ENCODE measurements at regions of chrX and their contacts with region 1.

Region 1: GRCh38 chrX:71254092-71254941 is at the start of gene ZMYM3:
- DNase-seq: peak; percentile 76
- ATAC-seq: peak; percentile 89
- H3K4me3 ChIP-seq: peak within 1 kb of the TSS; percentile 100
- H3K27ac ChIP-seq: peak within 1 kb of the TSS; percentile 98
- H3K4me1 ChIP-seq: peaks cover 8% of the 10 kb centered on the region
- H3K27me3 ChIP-seq: no peaks in the 10 kb centered on the region
- CTCF ChIP-seq: no peak
- POLR2A ChIP-seq: no peak
- RAD21 ChIP-seq: no peak
- total RNA-seq, gene ZMYM3: 8.3 and 10.0 TPM in 2 replicates

Region 2: DNA sequence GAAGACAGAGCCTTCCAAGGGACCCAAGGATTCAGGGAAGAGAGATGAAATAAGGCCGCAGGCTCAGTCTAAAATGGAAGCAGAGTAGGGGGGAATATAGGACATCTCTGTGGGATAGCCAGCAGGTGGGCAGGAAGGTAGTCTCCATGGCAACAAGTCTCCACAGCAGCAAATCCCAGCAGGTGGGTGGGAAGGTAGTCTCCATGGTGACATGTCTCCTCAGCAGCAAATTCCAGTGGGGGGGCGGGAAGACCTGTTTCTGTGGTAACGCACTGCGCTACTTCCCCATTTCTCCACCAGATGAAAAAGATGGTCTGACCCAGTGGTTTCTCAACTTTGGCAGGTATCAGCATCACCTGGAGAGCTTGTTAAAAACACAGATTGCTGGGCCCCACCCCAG is 91.3 kb before region 1 on chrX:
- CTCF ChIA-PET with region 1: no interaction called
- POLR2A ChIA-PET with region 1: no interaction called
- dilution Hi-C with region 1: no loop called
- in situ Hi-C with region 1: no loop called
- intact Hi-C with region 1: no loop called
- DNase-seq: no peak
- ATAC-seq: no peak
- H3K4me3 ChIP-seq: no peak overlapping the region
- H3K27ac ChIP-seq: no peak overlapping the region
- H3K4me1 ChIP-seq: no peaks in the 10 kb centered on the region
- H3K27me3 ChIP-seq: peaks cover 11% of the 10 kb centered on the region
- CTCF ChIP-seq: no peak
- POLR2A ChIP-seq: no peak
- RAD21 ChIP-seq: no peak

Region 3: GRCh38 chrX:71283403-71284143 is 29.3 kb after region 1 on chrX and contains the start of gene NONO:
- CTCF ChIA-PET with region 1: no interaction called
- POLR2A ChIA-PET with region 1: no interaction called
- dilution Hi-C with region 1: no loop called
- in situ Hi-C with region 1: no loop called
- intact Hi-C with region 1: loop called (anchors 2 kb)
- DNase-seq: peak; percentile 99
- ATAC-seq: peak; percentile 84
- H3K4me3 ChIP-seq: peak within 1 kb of the TSS; percentile 90
- H3K27ac ChIP-seq: peak within 1 kb of the TSS; percentile 98
- H3K4me1 ChIP-seq: no peaks in the 10 kb centered on the region
- H3K27me3 ChIP-seq: no peaks in the 10 kb centered on the region
- CTCF ChIP-seq: 0 out of 2 replicates have a peak, but pooled peaks have one; percentile 23
- POLR2A ChIP-seq: peak; percentile 89
- RAD21 ChIP-seq: no peak
- total RNA-seq, gene NONO: 444 and 609 TPM in 2 replicates

Region 4: GRCh38 chrX:71298119-71298518 is 43.8 kb after region 1 on chrX:
- CTCF ChIA-PET with region 1: no interaction called
- POLR2A ChIA-PET with region 1: no interaction called
- dilution Hi-C with region 1: no loop called
- in situ Hi-C with region 1: no loop called
- intact Hi-C with region 1: no loop called
- DNase-seq: no peak
- ATAC-seq: no peak
- H3K4me3 ChIP-seq: no peak overlapping the region
- H3K27ac ChIP-seq: no peak overlapping the region
- H3K4me1 ChIP-seq: no peaks in the 10 kb centered on the region
- H3K27me3 ChIP-seq: no peaks in the 10 kb centered on the region
- CTCF ChIP-seq: no peak
- POLR2A ChIP-seq: no peak
- RAD21 ChIP-seq: no peak

Region 5: GRCh38 chrX:71365876-71366673 is 111.8 kb after region 1 on chrX and contains the start of gene TAF1:
- CTCF ChIA-PET with region 1: no interaction called
- POLR2A ChIA-PET with region 1: interaction called, 4 read pairs
- dilution Hi-C with region 1: no loop called
- in situ Hi-C with region 1: no loop called
- intact Hi-C with region 1: loop called (anchors 5 kb)
- DNase-seq: peak; percentile 97
- ATAC-seq: peak; percentile 89
- H3K4me3 ChIP-seq: peak within 1 kb of the TSS; percentile 91
- H3K27ac ChIP-seq: peak within 1 kb of the TSS; percentile 95
- H3K4me1 ChIP-seq: no peaks in the 10 kb centered on the region; the same call in 1 of the 2 replicates
- H3K27me3 ChIP-seq: no peaks in the 10 kb centered on the region
- CTCF ChIP-seq: no peak
- POLR2A ChIP-seq: peak; percentile 68; the same call in 1 of the 2 replicates
- RAD21 ChIP-seq: no peak
- total RNA-seq, gene TAF1: 25.5 and 36.1 TPM in 2 replicates